B cell (primary cell): ENCODE measurements at regions of chr7 and their contacts with region 1.

Region 1: GRCh38 chr7:90804370-90804769 is 208.2 kb downstream of the CDK14 start:
- DNase-seq: no peak
- ATAC-seq: no peak
- H3K4me3 ChIP-seq: no peak overlapping the region
- H3K4me3 Mint-ChIP-seq: no peak overlapping the region
- H3K27ac ChIP-seq: no peak overlapping the region
- H3K27ac Mint-ChIP-seq: no peak overlapping the region
- H3K4me1 ChIP-seq: no peaks in the 10 kb centered on the region
- H3K4me1 Mint-ChIP-seq: no peaks in the 10 kb centered on the region
- H3K27me3 ChIP-seq: no peaks in the 10 kb centered on the region
- H3K27me3 Mint-ChIP-seq: no peaks in the 10 kb centered on the region
- CTCF ChIP-seq: no peak

Region 2: DNA sequence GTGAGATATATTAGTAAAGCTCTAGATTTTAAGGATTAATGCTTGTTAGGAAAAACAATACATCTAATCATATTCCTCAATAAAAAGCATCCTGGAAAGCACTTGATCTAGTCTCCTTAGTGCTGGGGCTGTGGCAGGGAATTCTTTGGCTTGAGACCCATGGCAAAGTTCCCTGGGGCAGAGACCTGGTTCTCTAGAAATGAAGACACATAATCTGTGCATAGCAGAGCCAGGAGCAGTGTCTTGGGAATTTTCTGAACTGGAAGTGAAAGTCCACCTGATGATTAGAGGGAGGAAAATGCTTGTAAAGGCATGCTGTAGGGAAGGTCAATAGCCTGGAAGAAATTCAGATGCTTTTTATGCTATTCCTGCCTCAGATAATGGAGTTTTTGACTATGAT is 39.1 kb after region 1 on chr7:
- CTCF ChIA-PET with region 1: no interaction called
- POLR2A ChIA-PET with region 1: no interaction called
- intact Hi-C with region 1: loop called (anchors 5 kb)
- DNase-seq: no peak
- ATAC-seq: no peak
- H3K4me3 ChIP-seq: no peak overlapping the region
- H3K4me3 Mint-ChIP-seq: no peak overlapping the region
- H3K27ac ChIP-seq: no peak overlapping the region
- H3K27ac Mint-ChIP-seq: no peak overlapping the region
- H3K4me1 ChIP-seq: peaks cover 5 to 15% of the 10 kb centered on the region in 2 donors
- H3K4me1 Mint-ChIP-seq: peaks cover 56% of the 10 kb centered on the region
- H3K27me3 ChIP-seq: no peaks in the 10 kb centered on the region
- H3K27me3 Mint-ChIP-seq: no peaks in the 10 kb centered on the region
- CTCF ChIP-seq: no peak